ENCODE measurements at regions of chr14 and their contacts with region 1.

Region 1: DNA sequence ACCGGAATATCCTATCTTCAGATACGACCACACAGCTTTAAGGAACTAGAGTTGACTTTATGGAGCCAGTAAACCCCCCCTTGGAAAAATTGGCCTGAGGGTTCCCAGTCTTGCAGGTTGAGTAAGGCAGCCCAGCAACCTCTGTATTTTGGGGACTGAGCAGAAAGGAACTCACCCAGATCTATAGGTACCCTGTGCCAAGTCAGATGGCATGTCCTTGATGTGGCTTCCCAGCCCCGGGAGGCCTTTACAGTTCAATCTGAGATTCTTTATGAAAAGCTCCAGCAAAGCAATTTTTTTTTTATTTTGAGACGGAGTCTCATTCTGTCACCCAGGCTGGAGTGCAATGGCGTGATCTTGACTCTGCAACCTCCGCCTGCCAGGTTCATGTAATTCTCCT is 27.6 kb downstream of the TMEM121 start:
- DNase-seq: no peak
- H3K4me3 ChIP-seq: no peak overlapping the region
- H3K27ac ChIP-seq: no peak overlapping the region
- H3K4me1 ChIP-seq: no peaks in the 10 kb centered on the region
- H3K27me3 ChIP-seq: no peaks in the 10 kb centered on the region
- CTCF ChIP-seq: no peak
- POLR2A ChIP-seq: no peak

Region 2: GRCh38 chr14:105666420-105666819 is 112.4 kb after region 1 on chr14:
- intact Hi-C with region 1: no loop called
- DNase-seq: no peak
- H3K4me3 ChIP-seq: no peak overlapping the region
- H3K27ac ChIP-seq: no peak overlapping the region
- H3K4me1 ChIP-seq: no peaks in the 10 kb centered on the region
- H3K27me3 ChIP-seq: no peaks in the 10 kb centered on the region
- CTCF ChIP-seq: no peak
- POLR2A ChIP-seq: no peak

Region 3: DNA sequence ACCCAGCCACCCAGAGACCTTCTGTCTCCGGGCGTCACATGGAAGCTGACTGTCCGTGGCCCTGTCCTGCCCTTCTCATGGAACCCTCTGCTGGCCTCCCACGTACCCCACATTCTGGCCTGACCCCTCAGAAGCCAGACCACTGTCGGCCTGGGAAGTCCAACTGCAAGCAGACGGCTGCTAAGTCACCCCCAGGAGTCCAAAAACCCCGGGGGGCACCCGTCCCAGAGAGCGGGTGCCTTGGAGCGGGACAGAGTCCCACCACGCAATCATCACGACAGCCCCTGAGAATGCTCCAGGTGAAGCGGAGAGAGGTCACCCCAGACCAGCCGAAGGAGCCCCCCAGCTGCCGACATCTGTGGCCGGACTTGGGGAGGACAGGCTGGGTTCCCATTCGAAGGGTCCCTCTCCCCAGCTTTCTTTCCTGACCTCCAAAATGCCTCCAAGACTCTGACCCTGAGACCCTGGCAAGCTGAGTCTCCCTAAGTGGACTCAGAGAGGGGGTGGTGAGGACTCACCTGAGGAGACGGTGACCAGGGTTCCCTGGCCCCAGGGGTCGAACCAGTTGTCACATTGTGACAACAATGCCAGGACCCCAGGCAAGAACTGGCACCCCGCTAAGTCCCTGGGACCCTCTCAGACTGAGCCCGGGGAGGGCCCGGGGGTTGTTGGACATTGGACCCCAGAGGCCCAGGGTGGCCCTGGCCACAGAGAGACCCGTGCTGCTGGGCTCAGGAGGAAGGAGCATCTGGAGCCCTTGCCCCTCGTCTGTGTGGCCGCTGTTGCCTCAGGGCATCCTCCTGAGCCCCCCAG is 309.5 kb after region 1 on chr14:
- intact Hi-C with region 1: no loop called
- DNase-seq: peak; percentile 6
- H3K4me3 ChIP-seq: no peak overlapping the region
- H3K27ac ChIP-seq: no peak overlapping the region
- H3K4me1 ChIP-seq: no peaks in the 10 kb centered on the region
- H3K27me3 ChIP-seq: no peaks in the 10 kb centered on the region
- CTCF ChIP-seq: no peak
- POLR2A ChIP-seq: no peak

Region 4: GRCh38 chr14:105944632-105945610 is 390.9 kb after region 1 on chr14:
- intact Hi-C with region 1: loop called (anchors 10 kb)
- DNase-seq: peak; percentile 86
- H3K4me3 ChIP-seq: no peak overlapping the region
- H3K27ac ChIP-seq: no peak overlapping the region
- H3K4me1 ChIP-seq: peaks cover 6% of the 10 kb centered on the region
- H3K27me3 ChIP-seq: no peaks in the 10 kb centered on the region
- CTCF ChIP-seq: peak; percentile 74 to 85 (median 79)
- POLR2A ChIP-seq: no peak

Measured in testis (tissue), 5 donors.